GM10248 (cell line): ENCODE measurements at regions of chr10 and their contacts with region 1.

Region 1: DNA sequence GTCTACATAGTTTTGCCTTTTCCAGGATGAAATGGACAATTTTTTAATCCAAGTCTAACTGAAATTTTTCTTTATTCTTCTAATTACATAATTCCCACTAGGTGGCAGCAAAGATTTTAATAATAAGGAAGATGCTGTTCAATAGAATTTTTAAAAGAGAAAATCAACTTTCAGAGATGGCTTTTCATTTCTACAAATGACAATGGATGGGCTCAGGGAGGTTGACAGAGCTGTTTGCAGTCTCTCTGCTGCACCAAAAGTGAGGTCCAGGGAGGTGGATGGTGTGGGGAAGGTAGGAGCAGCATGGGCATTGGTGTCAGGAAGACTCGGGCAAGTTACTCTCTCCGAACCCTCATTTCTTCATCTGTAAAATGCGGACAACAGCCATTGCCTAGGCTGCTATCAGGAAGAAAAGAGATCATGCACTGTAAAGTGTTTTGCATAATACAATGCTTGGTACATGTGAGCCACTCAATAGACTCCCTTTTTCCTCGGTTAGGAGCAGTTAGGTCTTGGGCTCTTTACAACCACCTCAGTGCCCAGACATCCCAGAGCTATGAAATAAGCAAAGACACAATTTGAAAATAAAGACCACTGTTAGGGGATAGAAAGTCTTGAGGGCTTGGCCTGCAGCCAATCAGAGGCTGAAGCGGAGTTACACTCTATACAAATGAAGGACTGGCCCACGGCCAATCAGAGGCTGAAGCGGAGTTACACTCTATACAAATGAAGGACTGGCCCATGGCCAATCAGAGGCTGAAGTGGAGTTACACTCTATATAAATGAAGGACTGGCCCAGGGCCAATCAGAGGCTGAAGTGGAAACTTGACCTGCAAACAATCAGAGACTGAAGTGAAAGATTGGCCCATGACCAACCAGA is 107.1 kb downstream of the ABLIM1 start:
- DNase-seq: no peak
- CTCF ChIP-seq: peak; percentile 40

Region 2: GRCh38 chr10:114780610-114781184 is 229.7 kb after region 1 on chr10:
- CTCF ChIA-PET with region 1: interaction called, 10 read pairs
- POLR2A ChIA-PET with region 1: no interaction called
- DNase-seq: no peak
- CTCF ChIP-seq: no peak

Region 3: GRCh38 chr10:115129752-115130151 is 578.8 kb after region 1 on chr10:
- CTCF ChIA-PET with region 1: interaction called, 10 read pairs
- POLR2A ChIA-PET with region 1: no interaction called
- DNase-seq: peak; percentile 15
- CTCF ChIP-seq: peak; percentile 16